Activated naive CD4-positive, alpha-beta T cell treated with anti-CD3 and anti-CD28 coated beads, Interleukin-2, amount 10 ng/mL, durations not matched to agents 7 days and 5 days (primary cell): ENCODE measurements at regions of chr15 and their contacts with region 1.

Region 1: GRCh38 chr15:81265944-81266775 is 57.8 kb downstream of the STARD5 start:
- DNase-seq: peak; percentile 91
- H3K4me3 Mint-ChIP-seq: peak overlapping the region; percentile 27
- H3K27ac Mint-ChIP-seq: peak overlapping the region; percentile 47
- H3K4me1 Mint-ChIP-seq: peaks cover 40% of the 10 kb centered on the region
- H3K27me3 Mint-ChIP-seq: peaks cover 24% of the 10 kb centered on the region

Region 2: DNA sequence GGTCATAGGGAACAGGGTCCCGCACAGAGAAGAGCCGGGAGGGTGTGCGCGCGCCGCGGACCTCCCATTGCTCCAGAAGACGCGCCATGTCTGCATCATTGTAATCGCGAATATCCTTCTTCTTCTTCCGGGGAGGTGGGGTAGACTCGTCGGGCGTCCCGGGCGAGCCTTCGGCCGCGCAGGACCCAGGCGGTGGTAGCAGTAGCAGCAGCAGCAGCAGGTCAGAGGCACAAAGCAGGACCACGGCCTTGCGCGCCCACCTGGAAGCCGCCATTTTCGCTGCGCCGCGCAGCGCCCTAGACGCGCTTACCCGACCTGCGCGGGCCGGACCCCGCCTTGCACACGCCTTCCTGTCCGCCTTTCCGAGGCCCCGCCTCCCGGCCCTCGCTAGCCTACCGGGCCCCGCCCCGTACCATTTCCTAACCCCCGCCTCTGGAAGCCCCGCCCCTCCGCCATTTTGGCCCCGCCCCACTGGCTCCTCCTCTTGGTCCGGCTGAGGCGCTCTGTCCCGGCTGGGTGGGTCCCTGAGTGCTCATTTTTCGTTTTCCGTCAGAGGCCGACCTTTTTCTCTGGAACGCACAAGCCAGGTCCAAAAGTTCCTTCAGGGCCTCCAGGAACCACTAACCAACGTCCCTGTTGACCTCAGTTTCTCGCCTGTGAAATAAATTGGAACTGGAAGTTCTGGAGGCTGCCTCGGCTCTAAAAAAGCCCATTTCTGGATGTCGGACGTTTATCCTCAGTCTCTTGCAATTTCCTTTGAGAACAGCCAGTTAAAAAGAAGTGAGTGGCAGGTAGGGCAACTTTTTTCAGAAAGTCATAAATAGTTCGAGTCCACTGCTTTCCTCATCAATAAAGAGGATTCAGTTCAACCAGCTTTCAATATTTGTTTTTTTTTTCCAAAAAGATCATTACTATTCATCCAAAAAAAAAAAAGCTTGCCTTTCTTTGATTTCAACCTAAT is 276.4 kb before region 1 on chr15 and contains the start of gene MESD:
- CTCF ChIA-PET with region 1: interaction called, 19 read pairs
- DNase-seq: peak; percentile 98
- H3K4me3 Mint-ChIP-seq: peak within 1 kb of the TSS; percentile 99
- H3K27ac Mint-ChIP-seq: peak within 1 kb of the TSS; percentile 96
- H3K4me1 Mint-ChIP-seq: peaks cover 71% of the 10 kb centered on the region
- H3K27me3 Mint-ChIP-seq: no peaks in the 10 kb centered on the region

Region 3: GRCh38 chr15:81117136-81117535 is 149.0 kb before region 1 on chr15:
- CTCF ChIA-PET with region 1: interaction called, 220 read pairs
- DNase-seq: no peak
- H3K4me3 Mint-ChIP-seq: no peak overlapping the region
- H3K27ac Mint-ChIP-seq: no peak overlapping the region
- H3K4me1 Mint-ChIP-seq: no peaks in the 10 kb centered on the region
- H3K27me3 Mint-ChIP-seq: peaks cover 47% of the 10 kb centered on the region

Region 4: GRCh38 chr15:81174792-81175327 is 91.3 kb before region 1 on chr15:
- CTCF ChIA-PET with region 1: interaction called, 12 read pairs
- DNase-seq: no peak
- H3K4me3 Mint-ChIP-seq: no peak overlapping the region
- H3K27ac Mint-ChIP-seq: no peak overlapping the region
- H3K4me1 Mint-ChIP-seq: peaks cover 7% of the 10 kb centered on the region
- H3K27me3 Mint-ChIP-seq: peaks cover 22% of the 10 kb centered on the region

Region 5: DNA sequence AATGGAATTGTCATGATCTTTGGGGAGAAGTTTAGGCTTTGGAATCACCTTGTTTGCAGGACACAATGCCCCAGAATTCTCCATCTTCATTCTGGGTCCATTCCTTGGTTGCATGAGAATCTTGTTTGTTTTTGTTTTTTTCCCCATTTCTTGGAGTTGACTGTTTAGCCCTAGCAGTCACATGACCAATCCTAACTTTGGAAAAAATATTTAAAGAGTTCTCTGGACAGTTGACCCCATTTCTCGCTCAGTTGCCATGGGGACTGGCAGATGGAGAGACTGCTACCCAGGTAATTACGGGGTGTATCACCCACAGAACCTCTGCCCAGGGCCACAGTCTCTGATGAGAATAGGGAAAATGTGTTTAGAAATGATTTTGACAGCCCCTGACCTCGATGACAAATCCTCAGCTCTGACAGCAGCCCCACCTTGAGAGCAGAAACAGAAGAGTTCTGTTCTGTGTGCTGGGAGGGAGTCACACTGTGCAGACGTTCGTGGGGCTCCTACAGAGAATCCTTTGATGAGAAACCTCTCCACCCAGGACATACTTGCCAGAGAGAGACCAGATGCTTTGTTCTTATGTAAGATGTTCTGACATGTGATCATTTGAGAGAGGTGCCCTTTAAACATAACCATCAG is 11.8 kb before region 1 on chr15:
- CTCF ChIA-PET with region 1: interaction called, 19 read pairs
- DNase-seq: no peak
- H3K4me3 Mint-ChIP-seq: no peak overlapping the region
- H3K27ac Mint-ChIP-seq: no peak overlapping the region
- H3K4me1 Mint-ChIP-seq: peaks cover 11% of the 10 kb centered on the region
- H3K27me3 Mint-ChIP-seq: peaks cover 37% of the 10 kb centered on the region

Region 6: GRCh38 chr15:81400640-81401236 is 134.6 kb after region 1 on chr15:
- CTCF ChIA-PET with region 1: interaction called, 85 read pairs
- DNase-seq: no peak
- H3K4me3 Mint-ChIP-seq: no peak overlapping the region
- H3K27ac Mint-ChIP-seq: no peak overlapping the region
- H3K4me1 Mint-ChIP-seq: no peaks in the 10 kb centered on the region
- H3K27me3 Mint-ChIP-seq: no peaks in the 10 kb centered on the region

Region 7: GRCh38 chr15:81612630-81613029 is 346.5 kb after region 1 on chr15:
- CTCF ChIA-PET with region 1: no interaction called
- DNase-seq: no peak
- H3K4me3 Mint-ChIP-seq: no peak overlapping the region
- H3K27ac Mint-ChIP-seq: no peak overlapping the region
- H3K4me1 Mint-ChIP-seq: no peaks in the 10 kb centered on the region
- H3K27me3 Mint-ChIP-seq: peaks cover 6% of the 10 kb centered on the region

Region 8: DNA sequence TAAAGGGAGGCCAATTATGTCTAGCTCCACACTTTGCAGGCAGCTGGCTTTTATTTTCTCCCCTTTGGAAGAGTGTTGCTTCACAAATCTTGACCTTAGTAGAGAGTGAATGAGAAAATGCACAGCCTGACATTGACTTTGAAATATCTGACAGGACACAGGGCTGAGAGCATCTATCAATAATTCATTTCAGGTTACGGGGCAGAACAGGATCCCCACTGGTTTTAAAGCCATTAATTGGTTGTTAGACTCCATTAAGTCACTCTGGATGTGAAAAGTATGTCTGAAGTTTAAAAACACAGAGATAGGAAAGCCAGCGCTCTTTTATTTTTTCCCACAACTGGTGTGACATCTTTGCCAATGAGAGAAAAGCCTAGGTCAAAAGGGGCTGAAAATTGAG is 359.7 kb after region 1 on chr15:
- CTCF ChIA-PET with region 1: no interaction called
- DNase-seq: no peak
- H3K4me3 Mint-ChIP-seq: no peak overlapping the region
- H3K27ac Mint-ChIP-seq: no peak overlapping the region
- H3K4me1 Mint-ChIP-seq: no peaks in the 10 kb centered on the region
- H3K27me3 Mint-ChIP-seq: no peaks in the 10 kb centered on the region

Region 9: GRCh38 chr15:81780966-81781365 is 514.8 kb after region 1 on chr15:
- CTCF ChIA-PET with region 1: no interaction called
- DNase-seq: no peak
- H3K4me3 Mint-ChIP-seq: no peak overlapping the region
- H3K27ac Mint-ChIP-seq: no peak overlapping the region
- H3K4me1 Mint-ChIP-seq: no peaks in the 10 kb centered on the region
- H3K27me3 Mint-ChIP-seq: no peaks in the 10 kb centered on the region